Activated B cell treated with CpG ODN at 0.5 μM for 24 hours (primary cell): ENCODE measurements at regions of chr3 and their contacts with region 1.

Region 1: DNA sequence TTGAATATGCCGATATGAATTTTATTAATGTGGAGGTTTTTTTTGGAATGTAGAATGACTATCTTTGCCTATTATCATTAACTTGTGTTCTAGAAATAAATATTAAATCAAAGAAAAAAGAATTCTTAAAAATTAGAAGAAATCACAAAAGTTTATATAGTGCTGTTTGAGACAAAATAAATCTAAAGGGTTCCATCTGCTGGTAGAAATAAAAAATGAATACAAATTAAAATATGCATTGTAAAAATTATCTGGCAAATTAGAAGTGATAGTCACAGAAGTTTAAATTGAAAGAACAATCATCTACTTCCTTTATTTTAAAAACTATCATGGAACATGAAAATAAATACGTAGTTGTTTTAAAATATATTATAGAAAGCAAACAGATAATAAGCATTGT is 22.7 kb upstream of the ZBTB20 start:
- DNase-seq: no peak
- ATAC-seq: no peak
- H3K4me3 Mint-ChIP-seq: no peak overlapping the region
- H3K27ac Mint-ChIP-seq: no peak overlapping the region
- H3K4me1 Mint-ChIP-seq: peaks cover 7% of the 10 kb centered on the region
- H3K27me3 Mint-ChIP-seq: no peaks in the 10 kb centered on the region
- CTCF ChIP-seq: no peak

Region 2: GRCh38 chr3:115040673-115041286 is 129.0 kb before region 1 on chr3:
- CTCF ChIA-PET with region 1: interaction called, 5 read pairs
- POLR2A ChIA-PET with region 1: no interaction called
- intact Hi-C with region 1: loop called (anchors 1 kb)
- DNase-seq: no peak
- ATAC-seq: no peak
- H3K4me3 Mint-ChIP-seq: no peak overlapping the region
- H3K27ac Mint-ChIP-seq: no peak overlapping the region
- H3K4me1 Mint-ChIP-seq: no peaks in the 10 kb centered on the region
- H3K27me3 Mint-ChIP-seq: no peaks in the 10 kb centered on the region
- CTCF ChIP-seq: peak; percentile 24